ENCODE measurements at regions of chr18 and their contacts with region 1.

Region 1: GRCh38 chr18:58493516-58494253 is 135.2 kb downstream of the ALPK2 start:
- DNase-seq: peak; percentile 82
- ATAC-seq: peak; percentile 89
- H3K4me3 ChIP-seq: peak overlapping the region; percentile 43; the same call in 1 of the 2 replicates
- H3K27ac ChIP-seq: no peak overlapping the region
- H3K4me1 ChIP-seq: 0 out of 2 replicates have a peak, but pooled peaks cover 6% of the 10 kb centered on the region
- H3K27me3 ChIP-seq: no peaks in the 10 kb centered on the region
- CTCF ChIP-seq: peak; percentile 93

Region 2: GRCh38 chr18:58400337-58400870 is 93.3 kb before region 1 on chr18:
- CTCF ChIA-PET with region 1: no interaction called
- POLR2A ChIA-PET with region 1: no interaction called
- intact Hi-C with region 1: loop called (anchors 1 kb)
- DNase-seq: no peak
- ATAC-seq: no peak
- H3K4me3 ChIP-seq: no peak overlapping the region
- H3K27ac ChIP-seq: no peak overlapping the region
- H3K4me1 ChIP-seq: no peaks in the 10 kb centered on the region
- H3K27me3 ChIP-seq: no peaks in the 10 kb centered on the region
- CTCF ChIP-seq: 0 out of 2 replicates have a peak, but pooled peaks have one; percentile 5

Region 3: GRCh38 chr18:58452454-58453166 is 41.1 kb before region 1 on chr18:
- CTCF ChIA-PET with region 1: interaction called, 3 read pairs
- POLR2A ChIA-PET with region 1: no interaction called
- intact Hi-C with region 1: loop called (anchors 5 kb)
- DNase-seq: no peak
- ATAC-seq: no peak
- H3K4me3 ChIP-seq: no peak overlapping the region
- H3K27ac ChIP-seq: no peak overlapping the region
- H3K4me1 ChIP-seq: peaks cover 20% of the 10 kb centered on the region
- H3K27me3 ChIP-seq: no peaks in the 10 kb centered on the region
- CTCF ChIP-seq: no peak

Region 4: DNA sequence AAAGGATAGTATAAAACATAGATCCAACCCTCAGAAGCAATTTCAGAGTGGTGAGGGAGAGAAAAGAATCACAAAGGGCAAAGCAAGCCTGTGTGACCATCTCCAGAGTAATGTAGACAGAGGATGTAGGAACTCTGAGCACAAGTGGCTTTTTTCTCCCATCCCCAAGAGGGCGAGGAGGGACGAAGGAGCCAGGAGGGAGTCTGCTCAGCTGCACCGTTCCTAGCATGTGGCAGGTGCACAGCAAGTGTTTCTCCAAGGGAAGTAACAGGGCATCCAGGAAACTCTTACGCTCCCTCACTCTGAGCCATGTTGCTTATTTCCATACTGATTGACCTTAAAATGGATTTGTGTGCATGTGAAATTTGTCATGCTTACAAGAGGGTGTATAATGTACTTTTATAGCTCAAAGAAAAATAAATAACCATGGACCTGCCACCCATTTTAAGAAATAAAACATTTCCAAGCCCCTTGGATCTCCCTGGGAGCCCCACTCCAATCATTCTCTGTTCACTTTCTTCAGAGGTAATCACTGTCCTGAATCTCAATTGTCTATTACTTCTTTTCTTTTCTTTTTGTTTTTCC is 608.2 kb after region 1 on chr18:
- CTCF ChIA-PET with region 1: no interaction called
- POLR2A ChIA-PET with region 1: no interaction called
- intact Hi-C with region 1: no loop called
- DNase-seq: no peak
- ATAC-seq: no peak
- H3K4me3 ChIP-seq: no peak overlapping the region
- H3K27ac ChIP-seq: no peak overlapping the region
- H3K4me1 ChIP-seq: no peaks in the 10 kb centered on the region
- H3K27me3 ChIP-seq: peaks cover 81% of the 10 kb centered on the region
- CTCF ChIP-seq: no peak